ENCODE measurements at regions of chr7 and their contacts with region 1.

Region 1: DNA sequence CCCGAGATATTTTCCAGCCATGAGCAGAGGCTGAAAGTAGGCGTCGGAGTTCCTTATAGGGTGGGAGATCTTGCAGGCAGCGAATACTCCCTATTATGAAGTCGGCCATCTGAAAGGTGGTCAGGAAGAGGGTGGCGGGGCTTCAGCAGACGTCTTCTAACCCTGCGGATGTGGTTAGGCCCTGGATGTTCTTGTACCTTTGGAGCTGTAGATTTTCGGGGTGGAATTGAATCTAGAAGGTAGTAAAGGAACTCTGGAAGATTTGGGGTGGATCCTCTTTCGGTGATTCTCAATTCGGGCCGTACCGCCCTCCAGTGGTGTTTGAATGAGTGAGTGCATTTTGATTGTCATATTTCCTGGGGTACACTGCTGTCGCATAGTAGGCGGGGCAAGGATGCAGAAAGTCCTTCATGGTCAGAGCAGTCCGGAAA is 635 bp downstream of the NUP205 start:
- DNase-seq: peak; percentile 47 to 67
- ATAC-seq: peak; percentile 71

Region 2: GRCh38 chr7:133564484-133564883 is 1993.9 kb before region 1 on chr7:
- intact Hi-C with region 1: no loop called
- DNase-seq: no peak
- ATAC-seq: no peak

Region 3: GRCh38 chr7:135281363-135281949 is 276.9 kb before region 1 on chr7:
- intact Hi-C with region 1: loop called in 1 of 2 experiments (anchors 5 kb)
- DNase-seq: peak; percentile 69 to 83
- ATAC-seq: peak; percentile 96

Region 4: GRCh38 chr7:135509903-135510602 is 48.3 kb before region 1 on chr7 and contains the start of gene CNOT4:
- intact Hi-C with region 1: loop called in 1 of 2 experiments (anchors 5 kb)
- DNase-seq: peak; percentile 96 to 97
- ATAC-seq: peak; percentile 96
- total RNA-seq, gene CNOT4: 17.4 to 21.0 TPM

Measured in left colon (tissue), 2 donors.